Colonic mucosa (tissue), 4 donors: ENCODE measurements at regions of chr9 and their contacts with region 1.

Region 1: DNA sequence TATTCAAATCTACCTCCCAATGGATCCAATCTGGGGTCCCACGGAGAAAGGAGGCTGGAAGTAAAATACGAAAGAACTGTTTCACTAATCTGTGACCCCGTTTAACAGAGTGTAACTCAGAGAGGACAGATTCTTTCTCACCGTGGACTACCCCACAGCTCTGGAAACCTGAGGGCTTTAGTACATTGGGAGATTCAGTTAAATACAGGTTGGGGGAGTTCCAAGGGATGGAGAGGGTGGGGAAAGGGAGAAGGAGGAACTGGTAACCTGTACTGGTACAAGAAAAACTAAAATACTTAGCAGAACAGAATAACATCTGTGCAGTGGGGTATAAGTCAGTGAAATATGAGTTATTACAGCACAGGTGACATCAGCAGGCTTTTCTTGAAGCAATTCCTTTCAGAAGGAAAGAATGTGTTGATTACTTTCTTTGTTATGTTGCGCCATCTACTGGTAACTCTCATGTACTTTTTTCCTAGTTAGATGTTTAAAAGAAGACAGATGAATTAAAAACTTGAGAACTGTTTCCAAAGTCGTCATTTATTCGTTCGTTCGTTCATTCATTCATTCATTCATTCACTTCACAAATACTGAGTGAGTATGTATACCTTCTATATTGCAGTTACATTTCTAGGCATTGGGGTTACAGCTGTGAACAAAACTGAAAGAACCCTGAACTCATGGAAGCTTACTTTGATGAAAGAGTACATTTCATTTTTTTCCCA is 30.0 kb upstream of the STOM start:
- DNase-seq: no peak
- H3K4me3 ChIP-seq: no peak overlapping the region
- H3K27ac ChIP-seq: no peak overlapping the region
- H3K4me1 ChIP-seq: no peaks in the 10 kb centered on the region
- H3K27me3 ChIP-seq: no peaks in the 10 kb centered on the region
- CTCF ChIP-seq: peak; percentile 65

Region 2: DNA sequence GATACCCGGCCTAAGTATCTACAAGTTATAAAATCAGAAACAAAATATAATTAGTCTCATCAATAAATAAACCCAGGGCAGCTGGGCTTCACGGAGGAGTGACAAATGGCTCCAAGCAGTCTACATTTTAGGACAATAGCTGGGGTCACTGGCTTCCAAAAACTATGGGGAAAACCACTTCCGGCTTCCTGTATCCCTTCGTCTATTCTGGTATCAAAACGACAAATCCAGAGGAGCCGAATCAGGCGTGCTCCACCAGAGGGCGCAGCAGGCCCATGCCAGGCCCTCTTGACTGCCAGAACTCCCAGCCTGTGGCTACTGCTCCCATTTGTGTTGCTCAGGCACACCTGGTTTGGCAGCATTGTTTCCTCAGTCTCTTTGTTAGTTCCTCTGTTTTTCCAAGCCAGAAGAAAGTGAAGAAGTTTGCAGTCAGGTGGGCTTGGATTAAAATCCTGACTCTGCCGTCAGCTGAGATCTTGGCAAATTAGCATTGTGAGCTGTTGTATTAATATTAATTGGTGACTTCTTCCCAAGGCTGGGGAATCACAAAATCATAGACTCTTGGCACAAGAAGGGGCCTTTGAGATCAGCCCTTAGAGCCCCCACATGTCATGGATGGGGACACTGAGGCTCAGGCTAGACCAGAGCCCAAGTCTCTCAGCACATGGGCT is 186.8 kb before region 1 on chr9:
- intact Hi-C with region 1: loop called (anchors 5 kb)
- DNase-seq: peak; percentile 91
- H3K4me3 ChIP-seq: no peak overlapping the region
- H3K27ac ChIP-seq: no peak overlapping the region
- H3K4me1 ChIP-seq: no peaks in the 10 kb centered on the region
- H3K27me3 ChIP-seq: no peaks in the 10 kb centered on the region
- CTCF ChIP-seq: peak; percentile 87